Caco-2 (cell line): ENCODE measurements at regions of chr16 and their contacts with region 1.

Region 1: DNA sequence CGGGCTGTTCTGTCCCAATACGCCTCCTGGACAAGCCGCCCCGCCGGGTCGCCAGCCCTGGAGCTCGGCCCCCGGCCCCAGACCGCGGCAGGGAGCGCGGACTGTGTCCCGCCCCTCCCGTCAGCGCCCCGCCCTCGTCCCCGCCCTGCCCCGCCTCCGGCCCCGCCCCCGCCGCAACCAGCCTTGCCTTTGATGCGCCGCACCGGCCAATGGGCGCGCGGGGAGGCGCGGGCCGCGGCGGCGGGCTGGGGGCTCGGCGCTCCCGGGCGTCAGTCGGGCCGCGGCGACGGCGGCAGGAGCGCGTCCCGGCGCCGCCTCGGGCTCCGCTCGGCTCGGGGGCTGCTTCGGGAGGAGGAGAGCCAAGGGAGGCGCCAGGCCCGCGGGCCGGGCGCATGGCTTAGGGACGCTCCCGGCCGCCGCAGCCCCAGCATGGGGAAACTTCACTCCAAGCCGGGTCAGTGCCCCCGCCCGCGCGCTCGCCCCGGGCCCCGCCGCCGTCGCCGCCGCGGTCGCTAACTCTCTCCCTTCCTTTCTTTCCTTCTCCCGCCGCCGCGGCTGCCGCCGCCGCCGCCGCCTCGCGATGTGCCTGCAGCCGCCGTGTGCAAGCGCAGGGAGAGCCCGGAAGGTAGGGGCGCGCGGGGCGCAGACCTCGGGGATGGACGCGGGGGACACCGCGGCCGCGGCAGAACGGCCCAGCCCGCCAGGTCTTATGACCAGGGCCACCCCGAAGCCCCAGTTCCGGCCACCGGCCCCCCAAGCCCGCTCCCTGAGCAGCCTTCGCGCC is at the start of gene NKD1:
- DNase-seq: peak; percentile 76 to 91
- H3K4me3 ChIP-seq: peak within 1 kb of the TSS; percentile 87
- H3K4me3 Mint-ChIP-seq: peak within 1 kb of the TSS; percentile 73
- H3K27ac Mint-ChIP-seq: peak within 1 kb of the TSS; percentile 81
- H3K4me1 ChIP-seq: no peaks in the 10 kb centered on the region; the same call in 1 of the 2 replicates
- H3K4me1 Mint-ChIP-seq: peaks cover 16% of the 10 kb centered on the region
- H3K27me3 ChIP-seq: no peaks in the 10 kb centered on the region
- H3K27me3 Mint-ChIP-seq: no peaks in the 10 kb centered on the region
- CTCF ChIP-seq: no peak
- total RNA-seq, gene NKD1: 37.9 and 54.9 TPM in 2 replicates

Region 2: DNA sequence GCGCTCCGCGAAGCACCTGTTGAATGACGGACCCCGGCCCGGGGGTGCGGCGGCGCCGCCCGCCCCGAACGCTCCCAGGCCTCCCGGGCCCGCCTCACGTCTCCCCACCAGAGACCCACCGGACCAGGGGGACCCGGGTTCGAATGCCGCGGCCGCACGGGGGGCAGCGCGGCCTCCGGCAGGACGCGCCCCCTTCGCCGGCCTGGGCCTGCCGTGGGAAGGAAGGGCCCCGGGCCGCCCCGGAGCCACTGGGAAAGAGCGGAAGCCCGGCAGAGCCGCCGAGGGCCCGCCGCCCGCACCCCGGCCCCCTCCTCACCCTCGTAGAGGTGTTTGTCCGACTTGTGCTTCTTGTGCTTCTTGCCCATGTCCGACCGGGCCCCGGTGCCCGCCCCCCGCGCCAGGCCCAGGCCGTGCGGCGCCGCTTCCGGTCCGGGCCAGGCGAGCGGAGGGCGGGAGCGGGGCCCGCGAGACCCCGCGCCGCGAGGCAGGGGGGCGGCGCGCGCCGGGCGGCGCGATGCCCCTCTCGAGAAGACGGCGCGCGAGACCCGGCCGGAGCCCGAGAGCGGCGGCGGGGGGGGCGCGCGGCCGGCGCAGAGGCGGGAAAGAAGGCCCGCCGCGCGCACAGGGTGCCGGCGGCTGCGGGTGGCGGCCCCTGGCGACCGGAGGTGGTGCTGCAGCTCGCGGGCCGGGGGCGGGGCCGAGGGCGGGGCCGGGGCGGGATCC is 179.7 kb before region 1 on chr16 and contains the start of gene BRD7:
- CTCF ChIA-PET with region 1: interaction called, 10 read pairs
- POLR2A ChIA-PET with region 1: interaction called, 4 read pairs
- intact Hi-C with region 1: no loop called
- DNase-seq: peak in 1 of 2 experiments; percentile 86
- H3K4me3 ChIP-seq: peak within 1 kb of the TSS; percentile 55
- H3K4me3 Mint-ChIP-seq: peak within 1 kb of the TSS; percentile 90
- H3K27ac Mint-ChIP-seq: peak within 1 kb of the TSS; percentile 72
- H3K4me1 ChIP-seq: peaks cover 20% of the 10 kb centered on the region
- H3K4me1 Mint-ChIP-seq: peaks cover 30% of the 10 kb centered on the region
- H3K27me3 ChIP-seq: no peaks in the 10 kb centered on the region
- H3K27me3 Mint-ChIP-seq: no peaks in the 10 kb centered on the region
- CTCF ChIP-seq: peak; percentile 43 to 69
- total RNA-seq, gene BRD7: 147 and 170 TPM in 2 replicates

Region 3: GRCh38 chr16:50373780-50374179 is 174.5 kb before region 1 on chr16:
- CTCF ChIA-PET with region 1: interaction called, 10 read pairs
- POLR2A ChIA-PET with region 1: interaction called, 4 read pairs
- intact Hi-C with region 1: loop called (anchors 1 kb)
- DNase-seq: no peak
- H3K4me3 ChIP-seq: no peak overlapping the region
- H3K4me3 Mint-ChIP-seq: no peak overlapping the region
- H3K27ac Mint-ChIP-seq: no peak overlapping the region
- H3K4me1 ChIP-seq: peaks cover 10% of the 10 kb centered on the region; the same call in 1 of the 2 replicates
- H3K4me1 Mint-ChIP-seq: peaks cover 18% of the 10 kb centered on the region
- H3K27me3 ChIP-seq: no peaks in the 10 kb centered on the region
- H3K27me3 Mint-ChIP-seq: no peaks in the 10 kb centered on the region
- CTCF ChIP-seq: no peak

Region 4: GRCh38 chr16:50467943-50468760 is 80.2 kb before region 1 on chr16:
- CTCF ChIA-PET with region 1: no interaction called
- POLR2A ChIA-PET with region 1: no interaction called
- intact Hi-C with region 1: loop called (anchors 5 kb)
- DNase-seq: peak; percentile 93 to 95
- H3K4me3 ChIP-seq: peak overlapping the region; percentile 43
- H3K4me3 Mint-ChIP-seq: peak overlapping the region; percentile 74
- H3K27ac Mint-ChIP-seq: peak overlapping the region; percentile 93
- H3K4me1 ChIP-seq: peaks cover 66% of the 10 kb centered on the region
- H3K4me1 Mint-ChIP-seq: peaks cover 35% of the 10 kb centered on the region
- H3K27me3 ChIP-seq: no peaks in the 10 kb centered on the region
- H3K27me3 Mint-ChIP-seq: no peaks in the 10 kb centered on the region
- CTCF ChIP-seq: no peak

Region 5: DNA sequence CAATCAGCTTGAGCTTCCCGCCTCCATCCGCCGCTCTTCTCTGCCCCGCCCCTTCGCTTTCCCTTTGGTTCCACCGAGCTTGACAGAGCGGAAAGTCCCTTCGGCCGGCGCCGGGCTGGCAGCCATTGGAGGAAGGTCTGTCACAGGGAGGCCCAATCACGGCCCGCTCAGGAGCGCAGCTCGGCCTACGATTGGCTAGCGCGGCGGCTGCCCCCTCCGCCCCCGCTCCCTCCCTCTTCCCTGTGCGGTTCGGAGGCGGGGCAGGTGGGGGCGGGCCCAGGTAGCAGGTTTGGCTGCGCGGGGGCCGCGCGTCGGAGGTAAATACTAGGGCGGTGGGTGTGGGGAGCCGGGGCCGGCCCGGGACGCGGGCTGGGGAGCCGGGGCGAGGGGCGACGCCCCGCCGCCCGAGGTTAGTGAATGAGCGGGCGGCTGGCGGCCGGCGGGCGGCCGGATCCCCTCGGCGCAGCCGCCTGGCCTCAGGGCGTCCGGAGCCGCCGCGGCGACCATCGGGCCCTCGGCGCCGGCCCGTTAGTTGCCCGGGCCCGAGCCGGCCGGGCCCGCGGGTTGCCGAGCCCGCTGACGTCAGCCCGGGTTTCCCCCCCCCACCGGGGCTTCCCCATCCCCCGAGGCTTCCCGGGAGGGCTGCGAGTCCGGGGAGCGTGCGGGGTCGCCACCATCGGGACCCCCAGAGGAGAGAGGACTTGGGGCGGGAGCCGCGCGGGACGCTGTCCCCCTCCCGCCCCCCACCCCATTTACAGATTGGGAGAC is 193.7 kb after region 1 on chr16 and contains the start of gene CYLD:
- CTCF ChIA-PET with region 1: no interaction called
- POLR2A ChIA-PET with region 1: no interaction called
- intact Hi-C with region 1: loop called (anchors 5 kb)
- DNase-seq: peak; percentile 100
- H3K4me3 ChIP-seq: peak within 1 kb of the TSS; percentile 76
- H3K4me3 Mint-ChIP-seq: peak within 1 kb of the TSS; percentile 78
- H3K27ac Mint-ChIP-seq: no peak within 1 kb of the TSS
- H3K4me1 ChIP-seq: no peaks in the 10 kb centered on the region; the same call in 1 of the 2 replicates
- H3K4me1 Mint-ChIP-seq: no peaks in the 10 kb centered on the region
- H3K27me3 ChIP-seq: peaks cover 1% of the 10 kb centered on the region; the same call in 1 of the 2 replicates
- H3K27me3 Mint-ChIP-seq: peaks cover 8% of the 10 kb centered on the region
- CTCF ChIP-seq: no peak
- total RNA-seq, gene CYLD: 9.8 and 13.1 TPM in 2 replicates

Region 6: DNA sequence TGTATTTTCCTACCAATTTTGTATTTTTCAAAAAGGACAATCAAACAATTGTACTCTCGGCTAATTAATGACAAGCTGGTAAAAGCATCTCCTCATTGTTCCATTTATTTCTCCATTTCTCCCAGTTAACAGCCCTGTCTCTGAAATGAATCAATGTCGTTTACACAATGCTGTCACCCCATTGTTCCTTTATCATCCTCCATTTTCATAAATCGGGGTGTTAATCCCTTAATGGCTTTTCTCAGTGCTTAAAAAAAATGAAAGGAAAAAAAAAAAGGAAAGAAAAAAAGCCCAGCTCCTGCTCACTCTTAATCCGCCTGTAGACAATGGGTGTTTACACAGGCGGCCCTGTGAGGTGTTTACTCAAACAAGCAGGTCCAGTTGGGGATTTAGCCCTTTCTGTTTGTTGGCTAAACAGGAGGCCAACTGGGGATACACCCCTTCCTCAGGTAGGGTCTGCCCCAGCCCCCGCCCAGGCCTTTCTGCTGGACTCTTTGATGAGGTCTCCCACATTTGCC is 689.6 kb after region 1 on chr16:
- CTCF ChIA-PET with region 1: no interaction called
- POLR2A ChIA-PET with region 1: interaction called, 10 read pairs
- intact Hi-C with region 1: no loop called
- DNase-seq: peak; percentile 56 to 57
- H3K4me3 ChIP-seq: no peak overlapping the region
- H3K4me3 Mint-ChIP-seq: no peak overlapping the region
- H3K27ac Mint-ChIP-seq: no peak overlapping the region
- H3K4me1 ChIP-seq: peaks cover 44% of the 10 kb centered on the region
- H3K4me1 Mint-ChIP-seq: peaks cover 29% of the 10 kb centered on the region
- H3K27me3 ChIP-seq: peaks cover 3% of the 10 kb centered on the region
- H3K27me3 Mint-ChIP-seq: peaks cover 23% of the 10 kb centered on the region
- CTCF ChIP-seq: no peak